MCF 10A (cell line): ENCODE measurements at regions of chr19 and their contacts with region 1.

Region 1: DNA sequence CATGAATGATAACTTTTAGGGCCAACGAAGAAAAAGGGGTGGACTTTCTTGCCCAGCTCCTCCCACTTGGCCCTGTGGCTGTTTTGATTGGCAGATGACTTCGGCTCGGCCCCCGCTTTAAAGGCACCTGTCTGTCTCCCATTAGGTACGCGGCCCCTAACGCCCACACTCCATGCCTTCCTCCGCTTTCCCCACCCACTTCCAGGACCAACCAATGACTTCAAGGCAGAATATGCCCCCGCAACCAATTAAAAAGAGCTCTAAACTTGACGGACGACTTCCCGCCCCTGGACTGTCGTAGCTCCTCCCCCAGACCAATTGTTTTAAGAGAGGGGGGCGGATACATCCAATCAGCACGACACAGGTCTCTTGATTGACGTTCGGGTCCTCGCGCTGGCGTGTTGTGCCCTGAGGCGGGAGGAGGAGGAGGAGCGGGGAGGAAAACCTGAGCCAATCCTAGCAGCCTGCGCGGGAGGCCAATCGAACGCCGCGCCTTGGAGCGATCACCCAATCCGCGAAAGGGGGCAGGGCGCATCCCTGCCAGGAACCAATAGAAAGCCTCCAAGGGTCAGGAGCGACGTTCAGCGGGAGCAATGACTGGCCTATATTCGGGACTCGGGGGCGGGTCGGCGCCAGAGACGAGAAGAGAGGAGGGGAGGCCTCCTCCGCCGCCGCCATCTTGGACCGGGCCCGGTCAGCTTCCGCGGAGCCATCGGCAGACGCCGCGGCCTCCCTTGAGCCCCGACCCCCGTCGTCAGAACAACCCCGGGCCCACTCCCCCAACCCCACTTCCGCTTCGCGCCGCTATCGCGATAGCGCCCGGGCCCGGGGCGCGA is at the start of gene CNOT3:
- DNase-seq: peak; percentile 100
- H3K4me3 Mint-ChIP-seq: peak within 1 kb of the TSS; percentile 79
- H3K27ac Mint-ChIP-seq: peak within 1 kb of the TSS; percentile 92
- H3K4me1 Mint-ChIP-seq: peaks cover 25% of the 10 kb centered on the region
- H3K27me3 Mint-ChIP-seq: no peaks in the 10 kb centered on the region
- CTCF ChIP-seq: no peak
- total RNA-seq, gene CNOT3: 63.2 and 80.5 TPM in 2 replicates

Region 2: DNA sequence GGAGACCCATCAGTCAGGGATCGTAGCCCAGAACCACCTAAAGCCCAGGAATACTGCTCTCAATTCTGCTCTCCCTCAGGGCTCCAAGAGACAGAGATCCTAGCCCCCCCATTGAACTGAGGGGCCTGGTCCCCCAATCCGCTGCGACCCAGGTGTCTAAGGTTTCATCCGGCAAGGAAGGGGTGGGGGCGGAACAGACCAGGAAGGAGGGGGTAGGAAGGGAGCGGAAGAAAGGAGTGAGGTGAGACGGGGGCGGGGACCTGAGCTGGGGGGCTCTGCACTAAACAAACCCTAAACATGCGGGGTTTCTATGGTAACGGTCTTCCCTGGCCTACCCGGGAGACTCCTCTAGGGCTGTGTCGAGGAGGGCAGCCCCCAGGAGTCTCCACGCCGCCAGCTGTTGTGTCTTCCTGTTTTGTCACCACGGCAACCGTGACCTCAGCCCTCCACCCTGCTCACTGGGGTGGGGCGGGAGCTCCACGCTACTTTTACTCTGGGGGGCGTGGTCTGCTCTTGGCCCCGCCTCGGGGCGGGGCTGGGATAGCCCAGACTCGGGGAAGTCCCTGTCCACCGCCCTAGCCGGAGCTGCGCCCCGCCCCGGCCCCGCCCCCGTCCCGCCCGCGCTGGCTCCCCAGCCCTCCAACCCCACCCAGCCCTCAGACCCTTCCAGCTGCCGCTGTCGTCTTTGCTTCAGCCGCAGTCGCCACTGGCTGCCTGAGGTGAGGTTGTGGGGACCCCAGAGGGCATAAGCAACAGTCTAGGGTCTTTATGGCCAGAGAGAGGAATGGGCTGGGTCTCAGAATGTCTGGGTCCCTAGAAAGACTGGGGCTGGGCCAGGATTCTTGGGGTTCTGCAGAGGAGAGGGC is 269.8 kb before region 1 on chr19 and contains the start of gene MYADM:
- CTCF ChIA-PET with region 1: no interaction called
- POLR2A ChIA-PET with region 1: interaction called, 10 read pairs
- intact Hi-C with region 1: loop called (anchors 2 kb)
- DNase-seq: peak; percentile 97
- H3K4me3 Mint-ChIP-seq: peak within 1 kb of the TSS; percentile 97
- H3K27ac Mint-ChIP-seq: peak within 1 kb of the TSS; percentile 100
- H3K4me1 Mint-ChIP-seq: peaks cover 20% of the 10 kb centered on the region
- H3K27me3 Mint-ChIP-seq: no peaks in the 10 kb centered on the region
- CTCF ChIP-seq: no peak
- total RNA-seq, gene MYADM: 39.0 and 43.3 TPM in 2 replicates

Region 3: GRCh38 chr19:54115109-54116063 is 21.9 kb before region 1 on chr19 and contains the starts of genes PRPF31 and TFPT:
- CTCF ChIA-PET with region 1: no interaction called
- POLR2A ChIA-PET with region 1: interaction called, 84 read pairs
- intact Hi-C with region 1: no loop called
- DNase-seq: peak; percentile 99
- H3K4me3 Mint-ChIP-seq: peak within 1 kb of the TSS; percentile 84
- H3K27ac Mint-ChIP-seq: peak within 1 kb of the TSS; percentile 98
- H3K4me1 Mint-ChIP-seq: peaks cover 6% of the 10 kb centered on the region
- H3K27me3 Mint-ChIP-seq: no peaks in the 10 kb centered on the region
- CTCF ChIP-seq: no peak
- total RNA-seq, gene PRPF31: 52.8 and 59.7 TPM in 2 replicates
- total RNA-seq, gene TFPT: 15.6 and 22.8 TPM in 2 replicates

Region 4: GRCh38 chr19:54149021-54149802 is 11.9 kb after region 1 on chr19:
- CTCF ChIA-PET with region 1: no interaction called
- POLR2A ChIA-PET with region 1: interaction called, 110 read pairs
- intact Hi-C with region 1: no loop called
- DNase-seq: no peak
- H3K4me3 Mint-ChIP-seq: no peak overlapping the region
- H3K27ac Mint-ChIP-seq: peak overlapping the region; percentile 17
- H3K4me1 Mint-ChIP-seq: no peaks in the 10 kb centered on the region
- H3K27me3 Mint-ChIP-seq: no peaks in the 10 kb centered on the region
- CTCF ChIP-seq: no peak

Region 5: DNA sequence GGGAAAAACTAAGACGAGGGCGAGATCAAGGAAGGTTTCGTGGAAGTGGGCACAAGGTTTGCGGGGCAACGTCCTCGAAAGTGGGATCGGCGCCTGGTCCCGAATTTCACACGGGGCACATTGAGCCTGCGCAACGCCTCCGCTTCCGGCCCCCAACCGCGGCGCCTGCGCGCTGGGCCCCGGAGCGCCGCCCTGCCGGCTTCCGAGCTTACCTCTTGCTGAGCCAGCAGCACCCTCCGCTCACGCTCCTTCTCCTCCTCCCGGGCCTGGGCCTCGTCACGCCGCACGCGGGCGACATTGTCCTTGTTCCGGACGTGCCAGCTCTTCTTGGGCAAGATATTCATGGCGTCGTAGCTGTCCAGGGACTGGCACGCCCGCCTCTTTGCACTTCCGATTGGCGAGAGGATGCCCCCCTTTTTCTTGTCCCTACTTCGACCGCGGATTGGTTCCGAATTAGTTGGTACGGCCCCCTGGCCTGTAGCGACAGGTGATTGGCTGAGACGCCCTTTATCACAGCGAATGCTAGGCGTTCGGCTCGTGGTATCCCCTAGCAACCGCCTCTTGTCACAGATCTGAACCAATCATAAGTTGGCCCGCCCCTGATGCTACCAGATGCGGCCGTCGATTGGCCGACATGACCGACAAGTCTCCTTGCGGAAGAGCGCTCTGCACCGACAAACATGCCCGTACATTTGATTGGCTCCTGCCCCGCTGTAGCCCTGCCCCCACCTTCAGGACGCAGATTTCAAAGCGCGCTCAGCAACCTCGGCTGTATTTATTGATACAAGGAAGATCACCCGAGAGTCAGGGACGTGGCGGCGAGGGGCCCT is 22.3 kb after region 1 on chr19 and contains the start of gene LENG1:
- CTCF ChIA-PET with region 1: interaction called, 4 read pairs
- POLR2A ChIA-PET with region 1: interaction called, 110 read pairs
- intact Hi-C with region 1: loop called (anchors 2 kb)
- DNase-seq: peak; percentile 100
- H3K4me3 Mint-ChIP-seq: peak within 1 kb of the TSS; percentile 76
- H3K27ac Mint-ChIP-seq: peak within 1 kb of the TSS; percentile 85
- H3K4me1 Mint-ChIP-seq: peaks cover 22% of the 10 kb centered on the region
- H3K27me3 Mint-ChIP-seq: no peaks in the 10 kb centered on the region
- CTCF ChIP-seq: no peak
- total RNA-seq, gene LENG1: 6.1 and 8.2 TPM in 2 replicates

Region 6: DNA sequence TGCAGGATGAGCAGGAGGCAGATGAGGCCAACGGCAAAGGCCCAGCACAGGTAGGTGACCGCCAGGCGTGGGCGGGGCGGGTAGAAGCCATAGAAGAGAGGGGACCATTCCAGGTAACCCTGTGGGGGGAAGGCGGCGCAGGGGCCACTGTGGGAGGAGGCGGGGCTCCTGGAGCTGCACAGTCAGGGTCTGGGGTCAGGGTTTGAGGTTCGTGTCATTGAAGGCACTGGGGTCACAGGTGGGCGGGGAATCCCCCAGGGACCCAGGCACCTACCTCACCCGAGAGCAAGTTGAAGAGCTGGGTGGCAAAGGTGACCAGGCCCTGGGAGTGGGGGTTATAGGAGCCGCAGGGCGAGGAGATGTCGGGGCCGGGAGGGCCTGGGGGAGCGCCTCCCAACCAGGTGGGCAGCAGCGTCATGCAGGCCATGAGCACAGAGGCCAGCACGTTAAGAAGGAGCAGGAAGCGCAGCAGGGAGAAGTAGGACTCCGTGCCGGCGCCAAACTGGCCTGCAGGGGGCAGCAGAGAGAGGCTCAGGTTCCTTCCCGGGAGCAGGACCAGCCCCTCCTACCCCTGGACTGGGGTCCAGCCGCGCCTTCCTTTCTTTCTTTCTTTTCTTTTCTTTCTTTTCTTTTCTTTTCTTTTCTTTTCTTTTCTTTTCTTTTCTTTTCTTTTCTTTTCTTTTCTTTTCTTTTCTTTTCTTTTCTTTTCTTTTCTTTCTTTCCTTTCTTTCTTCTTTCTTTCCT is 31.0 kb after region 1 on chr19:
- CTCF ChIA-PET with region 1: interaction called, 7 read pairs
- POLR2A ChIA-PET with region 1: interaction called, 19 read pairs
- intact Hi-C with region 1: no loop called
- DNase-seq: peak; percentile 86
- H3K4me3 Mint-ChIP-seq: no peak overlapping the region
- H3K27ac Mint-ChIP-seq: no peak overlapping the region
- H3K4me1 Mint-ChIP-seq: peaks cover 6% of the 10 kb centered on the region
- H3K27me3 Mint-ChIP-seq: no peaks in the 10 kb centered on the region
- CTCF ChIP-seq: peak; percentile 82

Region 7: DNA sequence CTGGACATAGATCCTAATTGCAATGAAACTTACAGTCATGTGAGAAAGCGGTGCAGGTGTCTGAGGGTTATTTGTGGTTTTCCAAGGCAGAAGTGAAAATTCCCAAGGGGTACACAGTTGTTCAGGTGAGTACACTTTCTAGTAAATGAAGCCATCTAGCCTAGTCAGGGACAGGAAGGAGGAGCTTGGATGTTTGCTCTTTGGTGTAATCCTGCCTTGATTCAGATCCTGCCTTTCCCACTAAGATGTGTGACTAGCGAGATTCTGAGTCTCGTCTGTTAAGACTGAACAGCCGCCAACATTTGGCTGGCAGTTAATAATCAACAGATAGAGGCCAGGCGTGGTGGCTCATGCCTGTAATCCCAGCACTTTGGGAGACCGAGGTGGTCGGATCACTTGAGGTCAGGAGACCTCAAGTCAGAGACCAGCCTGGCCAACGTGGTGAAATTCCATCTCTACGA is 65.9 kb after region 1 on chr19:
- CTCF ChIA-PET with region 1: no interaction called
- POLR2A ChIA-PET with region 1: interaction called, 13 read pairs
- intact Hi-C with region 1: no loop called
- DNase-seq: peak; percentile 35
- H3K4me3 Mint-ChIP-seq: peak overlapping the region; percentile 91
- H3K27ac Mint-ChIP-seq: no peak overlapping the region
- H3K4me1 Mint-ChIP-seq: peaks cover 17% of the 10 kb centered on the region
- H3K27me3 Mint-ChIP-seq: no peaks in the 10 kb centered on the region
- CTCF ChIP-seq: no peak

Region 8: DNA sequence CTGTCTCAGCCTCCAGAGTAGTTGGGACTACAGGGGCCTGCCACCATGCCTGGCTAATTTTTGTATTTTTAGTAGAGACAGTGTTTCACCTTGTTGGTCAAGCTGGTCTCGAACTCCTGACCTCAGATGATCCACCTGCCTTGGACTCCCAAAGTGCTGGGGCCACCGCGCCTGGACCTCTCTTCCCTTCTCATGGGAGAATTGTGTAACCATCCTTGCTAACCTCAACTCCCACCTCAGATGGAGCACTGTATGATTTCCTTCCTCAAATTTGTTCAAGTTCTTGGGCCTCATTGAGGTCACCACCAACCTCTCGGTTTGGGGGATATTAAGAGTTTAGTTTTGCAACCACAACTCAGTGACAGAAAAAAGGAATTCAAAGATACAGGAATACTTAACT is 165.0 kb after region 1 on chr19:
- CTCF ChIA-PET with region 1: no interaction called
- POLR2A ChIA-PET with region 1: no interaction called
- intact Hi-C with region 1: no loop called
- DNase-seq: no peak
- H3K4me3 Mint-ChIP-seq: no peak overlapping the region
- H3K27ac Mint-ChIP-seq: no peak overlapping the region
- H3K4me1 Mint-ChIP-seq: no peaks in the 10 kb centered on the region
- H3K27me3 Mint-ChIP-seq: peaks cover 40% of the 10 kb centered on the region
- CTCF ChIP-seq: no peak